GM12878 (cell line): ENCODE measurements at regions of chr9 and their contacts with region 1.

Region 1: DNA sequence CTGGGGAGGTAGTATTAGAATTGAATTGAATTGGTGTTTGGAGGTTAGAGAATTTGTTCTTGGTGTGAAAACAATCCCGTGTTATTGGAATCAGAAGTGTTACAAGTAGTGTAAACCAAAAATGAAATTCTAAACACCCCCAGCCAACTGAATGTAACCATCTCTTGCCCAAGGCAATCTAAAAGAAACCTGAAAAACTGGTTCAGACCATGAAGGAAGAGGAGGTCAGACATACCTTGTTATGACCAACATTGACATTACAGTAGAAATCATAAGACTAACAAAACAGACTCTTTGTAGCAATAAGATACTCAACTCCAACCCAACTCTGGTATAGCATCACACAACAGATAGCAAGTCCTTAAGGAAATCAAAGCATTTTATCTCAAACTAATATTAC is 158.9 kb downstream of the TUSC1 start:
- DNase-seq: no peak
- ATAC-seq: no peak
- H3K4me3 ChIP-seq: no peak overlapping the region
- H3K27ac ChIP-seq: no peak overlapping the region
- H3K4me1 ChIP-seq: no peaks in the 10 kb centered on the region
- H3K27me3 ChIP-seq: no peaks in the 10 kb centered on the region
- CTCF ChIP-seq: no peak
- EP300 ChIP-seq: no peak
- POLR2A ChIP-seq: no peak
- RAD21 ChIP-seq: no peak

Region 2: GRCh38 chr9:25551577-25551976 is 32.3 kb after region 1 on chr9:
- CTCF ChIA-PET with region 1: no interaction called
- POLR2A ChIA-PET with region 1: no interaction called
- RAD21 ChIA-PET with region 1: no interaction called
- SMC1A ChIA-PET with region 1: no interaction called
- in situ Hi-C with region 1: no loop called
- intact Hi-C with region 1: no loop called
- DNase-seq: no peak
- ATAC-seq: no peak
- H3K4me3 ChIP-seq: no peak overlapping the region
- H3K27ac ChIP-seq: no peak overlapping the region
- H3K4me1 ChIP-seq: no peaks in the 10 kb centered on the region
- H3K27me3 ChIP-seq: no peaks in the 10 kb centered on the region
- CTCF ChIP-seq: no peak
- EP300 ChIP-seq: no peak
- POLR2A ChIP-seq: no peak
- RAD21 ChIP-seq: no peak

Region 3: GRCh38 chr9:25570802-25571201 is 51.5 kb after region 1 on chr9:
- CTCF ChIA-PET with region 1: no interaction called
- POLR2A ChIA-PET with region 1: no interaction called
- RAD21 ChIA-PET with region 1: no interaction called
- SMC1A ChIA-PET with region 1: no interaction called
- in situ Hi-C with region 1: no loop called
- intact Hi-C with region 1: loop called (anchors 5 kb)
- DNase-seq: no peak
- ATAC-seq: no peak
- H3K4me3 ChIP-seq: no peak overlapping the region
- H3K27ac ChIP-seq: no peak overlapping the region
- H3K4me1 ChIP-seq: no peaks in the 10 kb centered on the region
- H3K27me3 ChIP-seq: no peaks in the 10 kb centered on the region
- CTCF ChIP-seq: no peak
- EP300 ChIP-seq: no peak
- POLR2A ChIP-seq: no peak
- RAD21 ChIP-seq: no peak

Region 4: GRCh38 chr9:26210338-26210851 is 691.1 kb after region 1 on chr9:
- CTCF ChIA-PET with region 1: no interaction called
- POLR2A ChIA-PET with region 1: no interaction called
- RAD21 ChIA-PET with region 1: no interaction called
- SMC1A ChIA-PET with region 1: no interaction called
- in situ Hi-C with region 1: no loop called
- intact Hi-C with region 1: no loop called
- DNase-seq: no peak
- ATAC-seq: peak; percentile 37
- H3K4me3 ChIP-seq: no peak overlapping the region
- H3K27ac ChIP-seq: no peak overlapping the region
- H3K4me1 ChIP-seq: no peaks in the 10 kb centered on the region
- H3K27me3 ChIP-seq: no peaks in the 10 kb centered on the region
- CTCF ChIP-seq: no peak
- EP300 ChIP-seq: no peak
- POLR2A ChIP-seq: no peak
- RAD21 ChIP-seq: no peak